HEK293 (cell line): ENCODE measurements at regions of chr19 and their contacts with region 1.

Region 1: DNA sequence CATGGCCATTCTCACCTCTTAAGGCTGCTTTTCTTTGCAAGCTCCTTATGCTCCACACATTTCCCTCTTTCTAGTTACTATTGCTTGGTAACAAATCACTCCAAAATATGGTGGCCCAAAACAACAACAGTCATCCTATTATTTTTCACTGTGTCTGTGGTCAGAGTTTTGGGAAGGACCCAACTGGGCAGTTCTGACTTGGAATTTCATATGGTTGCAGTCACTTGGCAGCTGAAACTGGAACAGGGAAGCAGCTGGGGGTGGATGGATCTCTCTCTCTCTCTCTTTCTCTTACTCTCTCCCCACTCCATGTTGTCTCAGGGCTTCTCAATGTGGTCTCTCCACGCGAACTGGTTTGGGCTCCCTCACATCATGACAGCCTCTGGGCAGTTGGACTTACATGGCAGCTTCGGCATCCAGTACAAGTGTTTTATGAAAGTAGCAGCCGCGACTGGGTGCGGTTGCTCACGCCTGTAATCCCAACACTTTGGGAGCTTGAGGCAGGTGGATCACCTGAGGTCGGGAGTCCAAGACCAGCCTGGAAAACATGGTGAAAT is 39.6 kb downstream of the NUMBL start:
- H3K4me3 ChIP-seq: no peak overlapping the region
- H3K27ac ChIP-seq: no peak overlapping the region
- H3K4me1 ChIP-seq: peaks cover 11% of the 10 kb centered on the region
- CTCF ChIP-seq: no peak

Region 2: GRCh38 chr19:40381321-40381720 is 269.5 kb before region 1 on chr19:
- CTCF ChIA-PET with region 1: no interaction called
- POLR2A ChIA-PET with region 1: no interaction called
- H3K4me3 ChIP-seq: no peak overlapping the region
- H3K27ac ChIP-seq: no peak overlapping the region
- H3K4me1 ChIP-seq: no peaks in the 10 kb centered on the region
- CTCF ChIP-seq: peak; percentile 61

Region 3: DNA sequence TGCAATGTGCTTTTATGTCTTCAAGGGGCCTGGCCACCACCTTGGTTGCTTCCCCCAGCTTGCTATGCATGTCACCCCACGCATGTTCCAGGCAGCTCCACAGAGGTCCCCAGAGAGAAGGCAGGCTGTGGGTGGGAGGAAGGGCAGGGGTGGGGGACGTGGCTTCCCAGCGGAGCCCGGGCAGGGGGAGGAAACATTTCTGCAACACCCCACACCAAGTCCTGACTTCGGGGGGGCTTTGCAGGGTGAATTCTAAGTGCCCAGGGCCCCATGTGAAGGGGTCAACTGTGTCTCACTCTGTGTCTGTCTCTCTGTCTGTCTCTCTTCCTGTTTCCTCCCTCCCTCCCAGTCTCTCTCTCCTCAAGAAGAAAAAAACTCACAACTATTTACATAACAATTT is 10.1 kb before region 1 on chr19:
- CTCF ChIA-PET with region 1: interaction called, 174 read pairs
- POLR2A ChIA-PET with region 1: interaction called, 4 read pairs
- H3K4me3 ChIP-seq: no peak overlapping the region
- H3K27ac ChIP-seq: no peak overlapping the region
- H3K4me1 ChIP-seq: peaks cover 10% of the 10 kb centered on the region
- CTCF ChIP-seq: no peak